ENCODE measurements at regions of chr3 and their contacts with region 1.

Region 1: GRCh38 chr3:133040696-133041523 is 2.7 kb downstream of the TMEM108 start:
- DNase-seq: no peak

Region 2: GRCh38 chr3:132981719-132982118 is 59.2 kb before region 1 on chr3:
- intact Hi-C with region 1: no loop called
- DNase-seq: no peak

Region 3: GRCh38 chr3:133159498-133160475 is 118.9 kb after region 1 on chr3:
- intact Hi-C with region 1: no loop called
- DNase-seq: no peak

Region 4: DNA sequence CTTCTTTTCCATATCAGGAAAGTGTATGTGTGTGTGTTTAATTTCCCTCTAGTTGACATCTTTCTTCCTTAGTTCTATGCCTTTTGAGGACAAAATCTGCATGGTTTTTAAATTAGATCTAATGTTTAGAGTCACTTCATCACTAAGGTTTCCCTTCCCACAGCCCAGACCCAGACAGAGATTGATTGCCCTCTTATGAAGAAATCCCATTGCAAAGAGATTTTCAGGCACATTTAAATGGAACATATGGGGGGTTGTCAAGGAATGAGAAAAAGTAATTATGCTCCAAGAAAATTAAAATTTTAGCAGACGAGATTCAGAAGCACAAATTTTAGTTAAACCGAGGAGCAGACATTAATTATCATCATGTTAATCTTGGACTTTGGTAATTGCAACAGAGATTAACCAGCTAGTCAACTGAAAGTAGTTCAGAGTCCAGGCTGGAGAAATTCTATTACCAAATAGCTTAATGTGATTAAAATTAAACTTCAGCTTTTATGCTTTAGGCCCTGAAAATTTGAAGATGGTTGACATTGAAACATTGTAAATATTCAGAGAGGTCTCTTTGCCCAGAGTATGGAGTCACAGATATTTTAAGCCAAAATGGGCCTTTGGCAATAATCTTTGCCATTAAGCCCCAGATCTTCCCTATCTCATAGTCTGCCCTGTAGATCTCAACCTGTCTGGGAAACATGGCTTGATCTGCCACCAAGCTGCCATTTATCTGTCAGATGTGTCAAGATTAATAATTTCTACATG is 140.7 kb after region 1 on chr3:
- intact Hi-C with region 1: no loop called
- DNase-seq: no peak

Region 5: DNA sequence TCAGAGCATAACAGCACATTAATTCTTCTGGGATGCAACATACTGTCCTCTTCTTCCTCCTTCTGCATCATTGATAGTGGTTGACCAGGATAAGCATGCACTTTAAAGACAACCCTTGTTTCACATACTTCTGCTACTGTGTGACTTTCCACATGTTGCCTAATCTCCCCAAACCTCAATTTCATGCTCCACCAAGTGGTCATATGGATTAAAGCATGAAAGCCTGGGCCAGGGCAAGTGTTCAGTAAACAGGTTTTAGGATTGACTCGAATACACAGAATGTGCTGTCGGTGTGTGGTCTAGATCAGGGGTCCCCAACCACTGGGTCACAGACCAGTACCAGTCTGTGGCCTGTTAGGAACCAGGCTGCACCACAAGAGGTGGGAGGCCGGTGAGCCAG is 336.5 kb after region 1 on chr3:
- intact Hi-C with region 1: loop called (anchors 2 kb)
- DNase-seq: no peak

Region 6: DNA sequence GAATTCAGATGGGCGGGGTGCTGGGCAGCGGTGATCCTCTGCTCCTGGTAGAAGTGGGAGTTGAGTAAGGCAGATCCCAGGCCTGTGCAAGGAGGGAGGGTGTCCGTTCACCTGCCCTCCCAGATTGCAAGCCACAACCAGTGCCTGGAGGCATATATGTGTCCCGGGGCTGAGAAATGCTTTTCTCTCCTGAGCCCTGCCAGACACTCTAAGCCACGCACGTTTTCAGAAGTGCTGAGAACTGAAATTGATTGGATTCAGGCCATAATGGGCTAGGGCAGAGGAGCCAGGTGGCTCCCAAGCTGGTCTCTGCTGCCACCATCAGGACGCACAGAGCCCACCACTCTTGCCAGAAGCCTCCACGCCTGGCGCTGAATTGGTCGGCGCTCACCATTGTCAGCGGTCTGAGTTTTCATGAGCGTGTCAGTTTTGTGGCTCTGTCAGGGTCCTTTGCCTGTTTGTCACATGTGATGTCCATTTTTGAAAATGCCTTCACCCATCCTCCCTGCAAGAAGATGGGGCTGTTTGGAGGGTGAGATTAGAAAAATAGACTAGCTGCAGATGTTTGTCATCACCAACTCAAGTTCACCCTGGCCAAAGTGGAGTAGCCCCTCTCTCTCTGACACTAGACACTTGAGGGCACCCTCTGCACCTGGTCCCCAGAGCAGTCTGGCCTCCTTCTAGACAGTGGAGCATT is 343.6 kb after region 1 on chr3:
- intact Hi-C with region 1: loop called (anchors 2 kb)
- DNase-seq: no peak

Region 7: GRCh38 chr3:133426721-133427120 is 385.8 kb after region 1 on chr3:
- intact Hi-C with region 1: loop called (anchors 2 kb)
- DNase-seq: no peak